Head of caudate nucleus (tissue), 42 donors: ENCODE measurements at regions of chr1 and their contacts with region 1.

Region 1: DNA sequence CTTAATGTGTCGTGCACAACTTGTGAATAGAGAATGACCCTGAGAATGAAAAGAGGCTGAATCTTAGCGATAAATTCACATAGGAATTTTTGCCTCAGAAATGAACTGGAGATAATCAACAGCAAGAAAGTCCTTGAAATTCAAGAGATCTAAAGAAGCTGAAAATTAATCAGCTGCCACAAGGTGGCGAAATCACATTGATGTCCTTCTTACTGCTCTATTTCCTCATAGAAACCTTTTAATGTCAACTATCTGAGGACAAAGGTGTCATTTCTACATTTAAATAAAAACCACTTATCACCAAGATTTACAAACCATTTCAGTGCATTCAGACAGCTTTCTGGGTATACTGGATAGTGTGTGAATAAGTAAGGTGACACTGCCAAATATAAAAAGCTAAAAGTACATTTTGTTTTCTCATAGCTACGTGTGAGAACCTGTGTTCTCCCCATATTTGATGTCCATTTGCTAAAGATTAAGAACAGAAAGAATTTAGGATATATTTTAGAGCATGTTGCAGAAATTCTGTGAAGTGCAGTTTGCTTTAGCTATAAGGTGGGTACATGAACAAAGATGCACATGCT is 485.3 kb upstream of the PTBP2 start:
- DNase-seq: peak in 31 of 42 donors; percentile 13 to 82 (median 59)

Region 2: GRCh38 chr1:96845464-96845863 is 609.2 kb after region 1 on chr1:
- intact Hi-C with region 1: loop called (anchors 10 kb)
- DNase-seq: peak in 32 of 42 donors; percentile 10 to 75 (median 32)